ENCODE measurements at regions of chr7 and their contacts with region 1.

Region 1: GRCh38 chr7:155533827-155534690 is 12.3 kb downstream of the CNPY1 start:
- DNase-seq: peak; percentile 44
- H3K4me3 Mint-ChIP-seq: peak overlapping the region; percentile 49
- H3K27ac Mint-ChIP-seq: peak overlapping the region; percentile 45
- H3K4me1 Mint-ChIP-seq: peaks cover 9% of the 10 kb centered on the region
- H3K27me3 Mint-ChIP-seq: peaks cover 93% of the 10 kb centered on the region

Region 2: DNA sequence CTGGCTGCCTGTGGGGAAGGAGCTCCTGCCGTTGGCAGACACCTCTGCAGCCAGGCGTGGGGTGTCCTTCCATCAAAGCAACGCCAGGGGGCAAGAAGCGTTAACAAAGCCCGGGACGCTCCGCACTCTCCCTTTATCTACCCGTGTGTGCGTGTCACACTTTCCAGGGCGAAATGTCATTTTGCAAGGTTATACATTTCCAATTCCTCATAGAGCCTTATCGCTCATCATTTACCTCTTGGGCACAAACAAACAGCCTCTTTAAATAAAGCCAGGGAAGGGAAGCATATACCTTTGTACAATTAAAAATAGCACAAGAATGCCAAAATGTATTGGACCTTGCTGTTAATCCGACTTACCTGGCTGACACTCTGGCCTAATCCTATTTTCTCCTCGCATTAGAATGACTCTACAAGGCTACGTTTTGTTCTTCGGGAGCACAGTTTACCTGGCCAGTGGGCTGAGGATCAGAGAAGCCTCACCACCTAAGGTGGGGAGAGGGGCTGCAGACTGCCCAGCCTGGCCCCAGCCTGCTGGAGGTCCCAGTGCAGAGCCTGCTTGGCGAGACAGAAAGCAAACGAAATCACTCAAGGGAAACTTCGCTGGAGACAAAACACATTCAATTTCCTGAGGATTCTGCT is 153.7 kb before region 1 on chr7:
- CTCF ChIA-PET with region 1: interaction called, 13 read pairs
- DNase-seq: peak; percentile 80
- H3K4me3 Mint-ChIP-seq: no peak overlapping the region
- H3K27ac Mint-ChIP-seq: no peak overlapping the region
- H3K4me1 Mint-ChIP-seq: peaks cover 17% of the 10 kb centered on the region
- H3K27me3 Mint-ChIP-seq: peaks cover 98% of the 10 kb centered on the region

Measured in activated naive CD4-positive, alpha-beta T cell treated with anti-CD3 and anti-CD28 coated beads, Interleukin-2, amount 10 ng/mL, durations not matched to agents 7 days and 5 days (primary cell).